Endothelial cell of umbilical vein (primary cell): ENCODE measurements at regions of chr21 and their contacts with region 1.

Region 1: DNA sequence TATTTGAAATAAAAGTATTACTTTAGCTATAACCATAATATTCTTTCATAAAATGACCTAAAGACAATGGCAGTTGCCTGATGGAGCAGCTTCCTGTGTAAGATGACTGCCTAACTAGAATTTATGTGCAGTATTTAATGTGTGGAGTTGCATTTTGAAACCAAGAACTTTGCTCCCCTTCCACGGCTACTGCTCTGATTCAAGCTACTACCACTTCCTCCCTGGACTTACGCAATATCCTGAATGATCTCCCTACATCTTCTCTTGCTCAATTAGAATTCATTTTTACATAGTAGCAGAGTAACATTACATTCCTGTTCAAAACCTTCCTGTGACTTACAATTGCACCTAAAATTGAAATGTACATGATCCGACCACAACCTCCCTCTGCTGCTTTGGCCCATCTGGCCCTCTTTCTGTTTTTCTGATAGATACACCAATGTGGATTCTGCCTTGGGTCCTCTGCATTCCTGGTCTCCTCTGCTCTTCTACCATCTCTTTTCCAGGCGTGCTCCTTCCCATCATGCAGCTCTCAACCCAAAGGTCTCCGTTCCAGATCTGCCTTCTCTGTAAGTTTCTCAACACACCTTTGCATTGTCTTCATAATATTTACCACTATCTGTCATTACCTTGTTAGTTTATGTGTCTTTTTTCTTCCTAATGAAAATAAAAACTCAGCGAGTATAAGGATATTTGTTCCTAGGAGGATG is 47.4 kb upstream of the USP25 start:
- DNase-seq: peak; percentile 66
- H3K4me3 ChIP-seq: peak overlapping the region in 1 of 3 experiments; percentile 56
- H3K27ac ChIP-seq: peak overlapping the region; percentile 100
- H3K4me1 ChIP-seq: peaks cover 30% of the 10 kb centered on the region
- H3K27me3 ChIP-seq: no peaks in the 10 kb centered on the region
- CTCF ChIP-seq: no peak
- POLR2A ChIP-seq: peak; percentile 23

Region 2: GRCh38 chr21:15706692-15707091 is 24.4 kb after region 1 on chr21:
- CTCF ChIA-PET with region 1: interaction called, 5 read pairs
- POLR2A ChIA-PET with region 1: no interaction called
- dilution Hi-C with region 1: no loop called
- intact Hi-C with region 1: loop called (anchors 1 kb)
- DNase-seq: peak; percentile 95
- H3K4me3 ChIP-seq: no peak overlapping the region
- H3K27ac ChIP-seq: no peak overlapping the region
- H3K4me1 ChIP-seq: peaks cover 8% of the 10 kb centered on the region
- H3K27me3 ChIP-seq: no peaks in the 10 kb centered on the region
- CTCF ChIP-seq: no peak
- POLR2A ChIP-seq: no peak

Region 3: GRCh38 chr21:15729674-15730483 is 47.5 kb after region 1 on chr21 and contains the start of gene USP25:
- CTCF ChIA-PET with region 1: no interaction called
- POLR2A ChIA-PET with region 1: no interaction called
- dilution Hi-C with region 1: no loop called
- intact Hi-C with region 1: loop called (anchors 1 kb)
- DNase-seq: peak; percentile 75
- H3K4me3 ChIP-seq: peak within 1 kb of the TSS; percentile 92 to 99 (median 95)
- H3K27ac ChIP-seq: peak within 1 kb of the TSS; percentile 82
- H3K4me1 ChIP-seq: peaks cover 19% of the 10 kb centered on the region
- H3K27me3 ChIP-seq: no peaks in the 10 kb centered on the region
- CTCF ChIP-seq: no peak
- POLR2A ChIP-seq: peak; percentile 82
- total RNA-seq, gene USP25: 66.9 and 67.5 TPM in 2 replicates

Region 4: GRCh38 chr21:15820852-15821379 is 138.6 kb after region 1 on chr21:
- CTCF ChIA-PET with region 1: no interaction called
- POLR2A ChIA-PET with region 1: no interaction called
- dilution Hi-C with region 1: no loop called
- intact Hi-C with region 1: loop called (anchors 5 kb)
- DNase-seq: peak; percentile 30
- H3K4me3 ChIP-seq: no peak overlapping the region
- H3K27ac ChIP-seq: no peak overlapping the region
- H3K4me1 ChIP-seq: peaks cover 20% of the 10 kb centered on the region
- H3K27me3 ChIP-seq: no peaks in the 10 kb centered on the region
- CTCF ChIP-seq: no peak
- POLR2A ChIP-seq: no peak

Region 5: DNA sequence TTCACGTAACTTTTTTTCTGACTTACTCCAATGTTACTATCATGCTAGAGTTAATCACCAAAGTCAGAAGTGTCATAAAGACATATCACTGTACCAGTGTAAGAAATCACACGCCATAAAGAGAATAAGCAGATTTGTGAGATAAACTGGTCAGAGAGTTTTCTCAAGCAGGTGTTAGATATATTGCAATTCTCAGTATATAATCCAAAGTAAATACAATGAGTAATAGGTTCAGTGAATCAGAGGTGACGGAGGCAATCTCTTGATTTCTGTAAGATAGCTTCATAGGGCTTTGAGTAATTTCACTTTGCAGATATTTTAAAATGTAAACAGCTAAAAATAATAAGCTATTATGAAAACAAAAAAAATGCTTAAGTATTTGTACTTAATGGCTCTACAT is 166.3 kb after region 1 on chr21:
- CTCF ChIA-PET with region 1: no interaction called
- POLR2A ChIA-PET with region 1: no interaction called
- dilution Hi-C with region 1: no loop called
- intact Hi-C with region 1: loop called (anchors 5 kb)
- DNase-seq: peak; percentile 92
- H3K4me3 ChIP-seq: no peak overlapping the region
- H3K27ac ChIP-seq: peak overlapping the region; percentile 69
- H3K4me1 ChIP-seq: peaks cover 56% of the 10 kb centered on the region
- H3K27me3 ChIP-seq: no peaks in the 10 kb centered on the region
- CTCF ChIP-seq: no peak
- POLR2A ChIP-seq: peak; percentile 48